Left cardiac atrium (tissue), 4 donors: ENCODE measurements at regions of chr2 and their contacts with region 1.

Region 1: DNA sequence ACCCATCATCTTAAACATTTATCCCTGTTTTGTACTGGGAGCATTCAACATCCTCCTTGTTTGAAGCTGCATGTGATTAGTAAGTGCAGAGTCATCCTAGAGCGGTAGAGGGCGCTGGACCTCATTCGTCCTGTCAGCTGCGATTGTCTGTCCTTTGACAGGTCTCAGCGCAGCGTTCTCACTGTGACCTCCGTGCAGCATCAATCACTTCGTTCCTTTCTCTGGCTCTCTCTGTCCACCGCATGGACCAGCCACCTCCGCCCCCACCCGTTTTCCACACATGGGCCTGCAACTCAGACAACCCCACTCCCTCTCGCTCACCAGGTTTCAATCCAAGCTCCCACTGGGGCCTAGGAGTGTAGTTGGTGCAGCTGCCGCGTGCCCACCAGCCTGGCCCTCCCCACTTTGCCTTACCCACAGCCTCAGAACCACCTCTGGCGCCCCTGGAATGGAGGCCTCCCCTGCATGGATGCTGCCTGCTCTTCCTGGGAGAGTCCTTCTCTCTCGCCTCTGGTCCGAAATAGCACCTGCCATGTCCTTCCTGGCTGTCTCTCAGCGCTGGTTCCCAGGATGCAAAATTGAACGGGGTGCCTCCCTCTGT is 90.5 kb downstream of the NDUFA10 start:
- DNase-seq: peak; percentile 65
- ATAC-seq: peak; percentile 51 to 66

Region 2: DNA sequence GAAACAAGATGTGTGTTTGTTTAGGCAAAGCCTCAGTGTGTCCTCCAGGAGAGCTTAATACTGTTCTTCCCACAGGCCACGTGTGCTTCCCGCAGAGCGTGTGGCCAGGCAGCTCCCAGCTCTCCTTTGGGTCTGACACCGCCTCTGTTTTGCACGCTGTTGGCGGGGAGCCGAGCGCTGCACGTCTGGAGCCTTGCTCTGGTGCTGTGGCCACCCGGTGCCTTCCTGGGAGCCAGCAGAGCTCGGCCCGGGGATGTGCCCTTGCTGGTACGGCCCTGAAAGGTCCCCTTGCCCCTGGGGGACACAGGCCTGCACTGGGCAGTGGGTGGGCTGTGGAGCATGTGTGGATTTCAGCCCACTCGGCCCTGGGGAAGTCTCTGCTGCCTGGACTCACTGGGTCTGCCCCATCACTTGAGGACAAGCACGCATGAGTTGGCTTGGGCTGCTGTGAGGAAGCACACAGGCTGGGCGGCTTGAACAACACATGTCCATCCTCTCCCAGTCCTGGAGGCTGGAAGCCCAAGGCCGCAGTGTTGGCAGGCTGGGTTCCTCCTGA is 373.1 kb before region 1 on chr2:
- intact Hi-C with region 1: no loop called
- DNase-seq: no peak
- ATAC-seq: peak in 1 of 2 donors; percentile 23

Region 3: GRCh38 chr2:239811111-239811781 is 123.4 kb before region 1 on chr2:
- intact Hi-C with region 1: no loop called
- DNase-seq: no peak
- ATAC-seq: no peak

Region 4: GRCh38 chr2:239979243-239980023 is 44.8 kb after region 1 on chr2:
- intact Hi-C with region 1: loop called (anchors 2 to 10 kb)
- DNase-seq: no peak
- ATAC-seq: peak; percentile 54 to 87

Region 5: GRCh38 chr2:240089140-240089705 is 154.6 kb after region 1 on chr2:
- intact Hi-C with region 1: no loop called
- DNase-seq: no peak
- ATAC-seq: no peak